ENCODE measurements at regions of chr16 and their contacts with region 1.

Region 1: GRCh38 chr16:70251629-70252354 is at the start of gene EXOSC6:
- DNase-seq: peak; percentile 87
- ATAC-seq: peak; percentile 96
- H3K4me3 Mint-ChIP-seq: peak within 1 kb of the TSS; percentile 89
- H3K27ac Mint-ChIP-seq: peak within 1 kb of the TSS; percentile 94
- H3K4me1 Mint-ChIP-seq: peaks cover 24% of the 10 kb centered on the region
- H3K27me3 Mint-ChIP-seq: no peaks in the 10 kb centered on the region
- CTCF ChIP-seq: peak; percentile 88
- total RNA-seq, gene EXOSC6: 30.5 and 32.0 TPM in 2 replicates

Region 2: GRCh38 chr16:70162041-70162451 is 89.7 kb before region 1 on chr16:
- CTCF ChIA-PET with region 1: interaction called, 5 read pairs
- POLR2A ChIA-PET with region 1: no interaction called
- intact Hi-C with region 1: loop called (anchors 10 kb)
- DNase-seq: no peak
- ATAC-seq: no peak
- H3K4me3 Mint-ChIP-seq: no peak overlapping the region
- H3K27ac Mint-ChIP-seq: peak overlapping the region; percentile 4
- H3K4me1 Mint-ChIP-seq: peaks cover 3% of the 10 kb centered on the region
- H3K27me3 Mint-ChIP-seq: no peaks in the 10 kb centered on the region
- CTCF ChIP-seq: no peak

Region 3: DNA sequence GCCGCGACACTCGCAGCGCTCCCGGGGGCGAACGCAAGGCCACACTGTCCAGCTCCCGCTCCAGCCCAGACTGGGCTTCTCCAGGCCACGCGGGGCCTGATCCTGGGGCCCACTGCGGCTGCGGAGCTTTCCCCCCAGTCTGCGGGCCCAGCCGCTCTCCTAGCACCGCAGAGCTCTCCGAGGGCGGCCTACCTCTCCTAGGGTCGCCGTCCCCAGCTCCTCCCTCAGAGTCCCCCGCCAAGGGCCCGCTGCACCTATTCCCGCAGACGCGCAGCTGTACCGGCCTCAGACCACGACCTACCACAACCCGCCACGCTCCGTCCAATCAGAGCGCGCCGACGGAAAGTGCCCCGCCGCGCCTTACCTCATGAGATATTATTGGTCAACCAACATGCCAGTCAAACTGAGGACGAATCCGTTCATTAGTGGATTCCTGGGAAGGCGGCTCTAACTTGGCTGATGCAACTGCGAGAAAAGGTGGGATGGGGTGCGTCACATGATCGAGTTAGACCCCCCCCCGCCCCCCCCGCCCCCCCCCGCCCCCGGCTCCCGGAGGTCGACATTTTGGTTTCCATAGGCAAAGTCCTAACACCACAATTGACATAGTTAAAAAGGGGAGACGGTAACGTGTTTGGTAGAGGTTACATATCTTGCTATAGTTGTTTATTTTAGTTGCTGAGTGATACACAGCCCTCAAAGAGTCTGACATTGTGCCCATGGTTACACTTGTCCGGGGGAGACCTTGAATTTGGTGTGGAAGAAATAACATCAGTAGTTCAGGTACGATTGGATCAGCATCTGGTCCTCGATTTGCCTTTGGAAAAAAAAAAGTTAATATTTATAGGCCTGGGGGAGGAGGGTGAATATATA is 37.7 kb after region 1 on chr16 and contains the start of gene AARS1:
- CTCF ChIA-PET with region 1: no interaction called
- POLR2A ChIA-PET with region 1: interaction called, 37 read pairs
- intact Hi-C with region 1: loop called (anchors 2 kb)
- DNase-seq: peak; percentile 84
- ATAC-seq: peak; percentile 96
- H3K4me3 Mint-ChIP-seq: peak within 1 kb of the TSS; percentile 98
- H3K27ac Mint-ChIP-seq: peak within 1 kb of the TSS; percentile 96
- H3K4me1 Mint-ChIP-seq: peaks cover 16% of the 10 kb centered on the region
- H3K27me3 Mint-ChIP-seq: no peaks in the 10 kb centered on the region
- CTCF ChIP-seq: no peak
- total RNA-seq, gene AARS1: 152 and 154 TPM in 2 replicates

Region 4: DNA sequence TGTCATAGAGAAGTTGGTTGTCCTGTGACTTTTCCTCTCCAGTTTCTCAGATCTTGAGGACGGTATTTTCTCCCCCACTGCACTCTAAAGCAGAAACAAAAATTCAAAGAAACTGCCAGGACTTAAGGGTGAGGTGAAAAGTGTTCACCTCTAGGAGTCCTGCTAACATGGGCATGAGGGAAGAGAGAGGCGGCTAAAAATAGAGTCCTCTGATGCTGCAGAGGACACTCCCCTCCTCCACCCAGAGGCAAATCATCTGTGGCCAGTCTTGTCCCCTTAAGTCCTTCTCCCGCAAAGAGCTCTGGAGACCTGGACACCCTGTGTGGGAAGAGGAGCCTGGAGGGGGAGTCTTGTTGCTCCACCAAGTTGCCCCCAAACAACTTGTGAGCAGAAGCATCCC is 90.2 kb after region 1 on chr16:
- CTCF ChIA-PET with region 1: no interaction called
- POLR2A ChIA-PET with region 1: interaction called, 11 read pairs
- intact Hi-C with region 1: loop called (anchors 1 kb)
- DNase-seq: no peak
- ATAC-seq: no peak
- H3K4me3 Mint-ChIP-seq: no peak overlapping the region
- H3K27ac Mint-ChIP-seq: no peak overlapping the region
- H3K4me1 Mint-ChIP-seq: peaks cover 9% of the 10 kb centered on the region
- H3K27me3 Mint-ChIP-seq: no peaks in the 10 kb centered on the region
- CTCF ChIP-seq: no peak

Region 5: DNA sequence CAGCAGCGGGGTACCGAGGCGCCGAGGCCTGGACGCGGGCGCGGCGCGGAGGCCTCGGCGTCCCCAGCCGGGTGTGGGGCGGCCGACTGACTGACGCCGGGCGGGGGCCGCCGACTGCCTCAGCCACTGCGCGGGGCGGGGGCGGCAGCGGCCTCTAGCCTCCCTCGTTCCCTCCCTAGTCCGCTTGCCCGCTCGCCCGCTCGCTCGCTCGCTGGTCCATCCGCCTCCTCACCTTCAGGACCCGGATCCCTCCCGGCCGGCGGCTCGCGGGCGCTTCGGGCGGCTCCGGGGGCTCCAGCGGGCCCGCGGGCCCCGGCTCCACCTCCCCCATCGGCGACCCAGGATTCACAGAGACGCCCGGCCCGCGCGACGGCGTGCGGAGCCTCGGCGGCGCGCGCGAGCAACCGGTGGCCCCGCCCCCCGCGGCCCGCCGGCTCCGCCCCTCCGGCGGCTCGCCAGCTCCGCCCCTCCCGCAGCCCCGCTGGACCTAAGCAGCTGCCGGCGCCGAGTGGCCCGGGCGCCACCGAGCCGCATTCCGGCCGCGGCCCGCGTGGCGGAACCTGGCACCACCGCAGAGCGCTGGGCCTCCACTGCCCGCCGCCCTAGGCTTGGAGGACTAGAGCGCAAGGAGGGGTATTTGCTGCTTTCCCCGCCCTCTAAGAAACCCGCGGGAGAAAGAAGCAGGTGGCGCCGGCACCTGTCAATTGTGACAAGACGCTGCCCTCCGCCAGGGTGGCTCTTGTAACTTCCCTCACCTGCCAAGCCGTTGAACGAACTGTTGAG is 1471.9 kb after region 1 on chr16:
- CTCF ChIA-PET with region 1: no interaction called
- POLR2A ChIA-PET with region 1: interaction called, 19 read pairs
- intact Hi-C with region 1: no loop called
- DNase-seq: peak; percentile 87
- ATAC-seq: peak; percentile 80
- H3K4me3 Mint-ChIP-seq: peak overlapping the region; percentile 85
- H3K27ac Mint-ChIP-seq: peak overlapping the region; percentile 85
- H3K4me1 Mint-ChIP-seq: peaks cover 50% of the 10 kb centered on the region
- H3K27me3 Mint-ChIP-seq: no peaks in the 10 kb centered on the region
- CTCF ChIP-seq: no peak